Activated naive CD4-positive, alpha-beta T cell treated with anti-CD3 and anti-CD28 coated beads for 36 hours (primary cell): ENCODE measurements at regions of chr10 and their contacts with region 1.

Region 1: DNA sequence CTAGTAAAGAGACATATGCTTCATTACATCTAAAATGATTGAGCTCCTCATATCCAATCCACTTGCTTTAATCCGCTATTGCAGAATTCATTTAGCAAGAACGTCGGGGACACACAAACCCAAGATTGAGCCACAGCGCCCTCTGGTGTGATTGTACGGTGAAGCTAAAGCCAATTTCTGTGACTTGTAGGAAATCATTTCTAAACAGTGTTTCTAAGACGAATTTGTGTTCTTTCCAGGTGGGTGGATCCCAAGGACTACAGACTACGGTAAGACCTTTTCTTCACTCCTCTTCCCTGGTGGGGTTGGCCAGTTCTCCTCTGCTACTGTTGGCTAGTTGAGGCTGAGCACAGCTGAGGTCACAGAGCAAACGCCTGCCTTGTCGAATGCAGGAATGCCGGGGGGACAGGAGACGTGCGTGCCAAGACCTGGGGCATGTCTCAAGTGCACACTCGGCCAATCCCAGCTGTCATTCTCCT is 5.2 kb downstream of the DMBT1 start:
- DNase-seq: peak; percentile 86
- H3K4me3 Mint-ChIP-seq: no peak overlapping the region
- H3K27ac Mint-ChIP-seq: no peak overlapping the region
- H3K4me1 Mint-ChIP-seq: peaks cover 11% of the 10 kb centered on the region
- H3K27me3 Mint-ChIP-seq: peaks cover 28% of the 10 kb centered on the region

Region 2: DNA sequence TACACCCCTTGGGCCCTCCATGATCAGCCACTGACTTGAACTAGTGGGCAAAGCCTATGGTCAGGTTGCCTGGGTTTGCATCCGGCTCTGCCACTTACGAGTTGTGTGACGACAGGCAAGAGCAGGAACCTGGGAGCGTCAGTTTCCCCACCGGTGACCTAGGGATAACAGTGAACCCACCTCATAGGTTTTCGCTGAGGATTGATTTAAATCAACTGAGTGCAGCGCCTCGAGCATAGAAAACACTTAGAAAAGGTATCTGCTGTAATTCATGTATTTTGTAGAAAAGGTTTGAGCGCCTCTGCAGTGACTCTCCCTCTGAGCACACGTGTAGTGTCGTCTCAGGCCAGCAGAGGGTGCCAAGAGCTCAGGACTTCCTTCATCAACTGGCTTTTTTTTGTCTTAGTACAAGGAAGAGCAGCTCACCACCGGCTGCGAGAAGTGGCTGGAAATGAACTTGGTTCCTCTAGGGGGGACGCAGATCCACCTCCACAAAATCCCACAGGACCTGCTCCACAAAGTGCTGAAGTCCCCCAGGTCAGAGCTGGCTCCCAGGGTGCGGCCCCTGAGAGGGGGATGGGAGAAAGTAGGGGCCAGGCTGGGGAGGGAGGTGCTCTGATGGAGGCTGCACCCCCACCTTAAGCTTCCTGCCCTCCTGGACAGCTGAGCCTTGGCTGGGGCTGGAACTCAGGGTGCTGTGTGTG is 267.0 kb before region 1 on chr10:
- CTCF ChIA-PET with region 1: interaction called, 39 read pairs
- intact Hi-C with region 1: loop called (anchors 1 kb)
- DNase-seq: peak; percentile 82
- H3K4me3 Mint-ChIP-seq: no peak overlapping the region
- H3K27ac Mint-ChIP-seq: no peak overlapping the region
- H3K4me1 Mint-ChIP-seq: peaks cover 3% of the 10 kb centered on the region
- H3K27me3 Mint-ChIP-seq: no peaks in the 10 kb centered on the region

Region 3: DNA sequence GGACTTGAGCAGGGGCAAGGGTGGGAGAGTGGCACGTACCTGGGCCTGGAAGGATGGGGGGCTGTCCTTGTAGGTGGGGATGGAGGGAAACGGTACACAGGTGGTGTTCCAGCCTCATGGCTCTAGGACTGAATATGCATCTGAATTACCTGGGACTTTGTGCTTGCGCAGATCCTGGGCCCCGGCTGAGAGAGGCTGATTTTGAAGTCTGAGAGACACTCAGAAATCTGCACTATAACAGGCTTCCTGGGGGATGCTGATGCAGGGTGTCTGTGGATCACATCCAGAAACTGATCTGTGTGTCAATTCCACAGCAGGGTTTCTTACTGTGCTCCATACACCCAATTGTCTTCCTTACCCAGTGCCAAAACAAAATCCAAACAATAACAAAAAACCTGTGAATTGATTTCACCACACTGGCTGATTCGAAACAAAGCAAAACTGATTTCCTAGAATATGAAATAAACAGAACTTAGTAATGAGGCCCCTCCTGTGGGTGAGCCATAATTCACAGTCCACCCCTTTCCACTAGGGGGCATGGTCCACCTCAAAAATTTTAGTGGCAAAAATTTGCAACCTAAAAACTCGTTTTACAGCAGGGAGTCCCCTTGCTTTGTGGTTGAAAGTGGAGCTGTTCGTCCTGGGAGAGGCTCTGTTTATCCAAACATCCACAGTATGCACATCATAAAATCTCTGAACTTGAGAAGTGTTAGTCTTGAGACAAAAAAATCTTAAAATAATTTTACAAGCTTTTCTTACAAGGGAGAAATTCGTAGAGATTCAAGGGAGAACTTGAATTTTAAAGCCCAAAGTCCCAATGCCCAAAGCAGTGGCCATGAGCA is 223.3 kb before region 1 on chr10:
- CTCF ChIA-PET with region 1: interaction called, 24 read pairs
- intact Hi-C with region 1: loop called (anchors 1 kb)
- DNase-seq: peak; percentile 80
- H3K4me3 Mint-ChIP-seq: no peak overlapping the region
- H3K27ac Mint-ChIP-seq: peak overlapping the region; percentile 31
- H3K4me1 Mint-ChIP-seq: peaks cover 10% of the 10 kb centered on the region
- H3K27me3 Mint-ChIP-seq: no peaks in the 10 kb centered on the region

Region 4: GRCh38 chr10:122490786-122491680 is 74.7 kb before region 1 on chr10:
- CTCF ChIA-PET with region 1: interaction called, 11 read pairs
- intact Hi-C with region 1: no loop called
- DNase-seq: peak; percentile 44
- H3K4me3 Mint-ChIP-seq: no peak overlapping the region
- H3K27ac Mint-ChIP-seq: no peak overlapping the region
- H3K4me1 Mint-ChIP-seq: peaks cover 12% of the 10 kb centered on the region
- H3K27me3 Mint-ChIP-seq: no peaks in the 10 kb centered on the region

Region 5: GRCh38 chr10:122525788-122526187 is 40.0 kb before region 1 on chr10:
- CTCF ChIA-PET with region 1: interaction called, 7 read pairs
- intact Hi-C with region 1: loop called (anchors 1 kb)
- DNase-seq: peak; percentile 13
- H3K4me3 Mint-ChIP-seq: no peak overlapping the region
- H3K27ac Mint-ChIP-seq: no peak overlapping the region
- H3K4me1 Mint-ChIP-seq: no peaks in the 10 kb centered on the region
- H3K27me3 Mint-ChIP-seq: peaks cover 1% of the 10 kb centered on the region

Region 6: DNA sequence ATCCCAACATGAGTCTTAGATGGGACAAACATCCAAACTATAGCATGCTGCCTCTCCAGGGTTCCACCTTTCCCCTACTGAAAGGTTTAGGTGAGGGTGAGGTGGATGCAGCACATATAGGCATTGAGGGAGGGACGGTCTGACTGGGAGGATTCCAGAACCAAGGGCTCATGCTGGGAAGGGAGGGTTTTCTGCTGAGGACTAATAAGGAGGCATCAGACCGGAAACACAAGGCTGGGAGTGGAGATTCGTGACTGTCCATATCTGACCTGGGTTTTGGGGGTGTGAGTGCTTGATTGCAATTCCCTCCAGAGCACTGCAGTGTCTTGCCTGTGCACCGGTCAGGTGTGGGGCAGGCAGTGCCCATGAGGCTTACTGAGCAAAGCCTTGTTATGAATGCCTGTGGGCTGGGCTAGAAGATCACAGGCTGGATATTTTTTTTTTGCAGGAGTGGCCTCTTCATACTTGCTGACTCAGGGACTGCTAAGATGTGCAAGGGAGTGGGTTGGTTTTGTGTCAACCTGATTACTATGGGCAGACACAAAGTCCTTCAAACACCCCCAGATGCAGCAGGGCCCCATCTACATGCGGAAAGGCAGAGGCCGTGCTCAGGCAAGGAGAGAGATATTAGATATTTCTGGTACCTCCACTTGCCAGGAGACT is 21.5 kb after region 1 on chr10:
- CTCF ChIA-PET with region 1: no interaction called
- intact Hi-C with region 1: no loop called
- DNase-seq: no peak
- H3K4me3 Mint-ChIP-seq: no peak overlapping the region
- H3K27ac Mint-ChIP-seq: no peak overlapping the region
- H3K4me1 Mint-ChIP-seq: no peaks in the 10 kb centered on the region
- H3K27me3 Mint-ChIP-seq: no peaks in the 10 kb centered on the region